ENCODE measurements at regions of chr5 and their contacts with region 1.

Region 1: DNA sequence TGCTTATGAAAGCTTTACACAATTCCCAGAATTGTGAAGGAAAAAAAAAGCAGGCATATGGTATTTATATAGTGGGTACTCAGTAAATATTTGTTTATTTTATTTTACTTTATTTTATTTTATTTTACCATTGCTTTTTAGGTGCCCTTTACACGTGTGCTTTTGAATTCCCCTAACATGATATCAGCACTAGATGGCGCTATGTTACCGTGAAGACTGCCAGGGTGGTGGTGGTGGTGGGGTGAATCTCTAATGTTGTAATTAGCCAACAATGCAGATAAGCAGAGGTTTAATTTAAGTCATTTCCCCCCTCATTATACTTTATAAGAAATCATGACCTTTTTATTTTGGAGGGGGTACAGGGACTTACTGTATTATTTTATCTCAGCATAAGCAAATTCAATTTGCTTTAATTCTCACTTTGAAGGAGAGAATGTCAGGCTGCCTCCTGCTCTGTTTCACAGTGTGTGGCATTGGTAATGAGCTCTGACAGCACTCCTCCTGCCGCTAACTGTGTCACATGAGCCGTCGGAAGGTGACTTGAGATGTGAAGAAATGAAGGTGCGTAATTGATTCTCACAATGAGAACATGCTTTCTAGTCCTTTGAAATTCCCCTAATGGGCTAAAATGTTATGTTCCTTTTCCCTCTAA is 165.6 kb downstream of the YTHDC2 start:
- DNase-seq: no peak
- H3K4me3 ChIP-seq: no peak overlapping the region
- H3K27ac ChIP-seq: no peak overlapping the region
- H3K4me1 ChIP-seq: no peaks in the 10 kb centered on the region
- H3K27me3 ChIP-seq: no peaks in the 10 kb centered on the region
- CTCF ChIP-seq: peak in 5 of 6 experiments; percentile 33 to 73 (median 64)
- POLR2A ChIP-seq: no peak

Region 2: GRCh38 chr5:114449860-114450421 is 770.9 kb after region 1 on chr5:
- intact Hi-C with region 1: loop called (anchors 10 kb)
- DNase-seq: no peak
- H3K4me3 ChIP-seq: no peak overlapping the region
- H3K27ac ChIP-seq: no peak overlapping the region
- H3K4me1 ChIP-seq: peaks cover 0 to 9% (median 0%) of the 10 kb centered on the region in 3 donors
- H3K27me3 ChIP-seq: no peaks in the 10 kb centered on the region
- CTCF ChIP-seq: peak; percentile 36 to 69 (median 63)
- POLR2A ChIP-seq: no peak